ENCODE measurements at regions of chr10 and their contacts with region 1.

Region 1: GRCh38 chr10:104032144-104032775 is 53.4 kb downstream of the COL17A1 start:
- DNase-seq: no peak
- H3K4me3 ChIP-seq: no peak overlapping the region
- H3K27ac ChIP-seq: no peak overlapping the region
- H3K4me1 ChIP-seq: no peaks in the 10 kb centered on the region
- H3K27me3 ChIP-seq: no peaks in the 10 kb centered on the region
- CTCF ChIP-seq: no peak
- POLR2A ChIP-seq: no peak

Region 2: GRCh38 chr10:103901299-103901698 is 131.0 kb before region 1 on chr10:
- intact Hi-C with region 1: loop called (anchors 5 kb)
- DNase-seq: no peak
- H3K4me3 ChIP-seq: no peak overlapping the region
- H3K27ac ChIP-seq: peak overlapping the region; percentile 35 to 82 (median 60)
- H3K4me1 ChIP-seq: peaks cover 0 to 65% (median 6%) of the 10 kb centered on the region in 3 donors
- H3K27me3 ChIP-seq: no peaks in the 10 kb centered on the region
- CTCF ChIP-seq: no peak
- POLR2A ChIP-seq: no peak

Measured in esophagus squamous epithelium (tissue), 5 donors.